Naive thymus-derived CD4-positive, alpha-beta T cell (primary cell): ENCODE measurements at regions of chr1 and their contacts with region 1.

Region 1: GRCh38 chr1:179809506-179810366 is 66.6 kb downstream of the FAM163A start:
- DNase-seq: peak; percentile 53 to 82 (median 78)
- ATAC-seq: peak; percentile 87
- H3K4me3 ChIP-seq: no peak overlapping the region
- H3K4me3 Mint-ChIP-seq: peak overlapping the region in 5 of 10 donors; percentile 20 to 46 (median 32)
- H3K27ac ChIP-seq: no peak overlapping the region
- H3K27ac Mint-ChIP-seq: peak overlapping the region in 6 of 9 donors; percentile 2 to 82 (median 26)
- H3K4me1 ChIP-seq: peaks cover 6 to 13% of the 10 kb centered on the region in 2 donors
- H3K4me1 Mint-ChIP-seq: peaks cover 1 to 13% (median 12%) of the 10 kb centered on the region in 7 donors
- H3K27me3 ChIP-seq: no peaks in the 10 kb centered on the region
- H3K27me3 Mint-ChIP-seq: peaks cover 0 to 6% (median 0%) of the 10 kb centered on the region in 5 donors

Region 2: DNA sequence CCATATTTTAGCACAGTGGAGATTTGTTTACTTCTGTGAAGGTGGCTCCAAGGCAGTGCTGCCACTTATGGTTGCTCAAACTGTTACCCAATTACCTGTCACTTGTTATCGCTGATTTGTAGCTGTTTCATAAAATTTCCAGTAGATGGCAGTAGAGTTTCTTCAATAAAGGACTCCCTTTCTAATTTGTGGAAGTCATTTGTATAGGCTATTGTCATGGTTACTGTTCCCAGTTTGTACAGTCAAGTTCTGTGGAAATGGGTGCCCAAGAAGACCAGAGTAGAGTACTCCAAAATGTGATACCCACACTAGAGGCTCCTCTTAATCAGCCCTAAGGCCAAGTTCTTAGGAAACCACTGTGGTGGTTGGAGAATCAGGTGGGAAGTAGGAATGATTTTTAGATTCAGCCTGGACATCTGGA is 1499.0 kb before region 1 on chr1:
- CTCF ChIA-PET with region 1: no interaction called
- POLR2A ChIA-PET with region 1: no interaction called
- intact Hi-C with region 1: loop called in 1 of 2 experiments (anchors 5 kb)
- DNase-seq: peak in 5 of 9 donors; percentile 13 to 42 (median 22)
- ATAC-seq: peak; percentile 69
- H3K4me3 ChIP-seq: no peak overlapping the region
- H3K4me3 Mint-ChIP-seq: no peak overlapping the region
- H3K27ac ChIP-seq: no peak overlapping the region
- H3K27ac Mint-ChIP-seq: no peak overlapping the region
- H3K4me1 ChIP-seq: no peaks in the 10 kb centered on the region
- H3K4me1 Mint-ChIP-seq: no peaks in the 10 kb centered on the region
- H3K27me3 ChIP-seq: no peaks in the 10 kb centered on the region
- H3K27me3 Mint-ChIP-seq: peaks cover 0 to 16% (median 8%) of the 10 kb centered on the region in 5 donors

Region 3: GRCh38 chr1:178768423-178768822 is 1041.3 kb before region 1 on chr1:
- CTCF ChIA-PET with region 1: no interaction called
- POLR2A ChIA-PET with region 1: no interaction called
- intact Hi-C with region 1: loop called in 1 of 2 experiments (anchors 10 kb)
- DNase-seq: peak in 5 of 9 donors; percentile 3 to 26 (median 15)
- ATAC-seq: peak; percentile 61
- H3K4me3 ChIP-seq: no peak overlapping the region
- H3K4me3 Mint-ChIP-seq: no peak overlapping the region
- H3K27ac ChIP-seq: no peak overlapping the region
- H3K27ac Mint-ChIP-seq: peak overlapping the region in 1 of 9 donors; percentile 16
- H3K4me1 ChIP-seq: no peaks in the 10 kb centered on the region
- H3K4me1 Mint-ChIP-seq: peaks cover 0 to 16% (median 8%) of the 10 kb centered on the region in 7 donors
- H3K27me3 ChIP-seq: no peaks in the 10 kb centered on the region
- H3K27me3 Mint-ChIP-seq: no peaks in the 10 kb centered on the region

Region 4: GRCh38 chr1:179824265-179824664 is 14.5 kb after region 1 on chr1:
- CTCF ChIA-PET with region 1: interaction called, 16 read pairs
- POLR2A ChIA-PET with region 1: interaction called, 66 read pairs
- intact Hi-C with region 1: no loop called
- DNase-seq: no peak
- ATAC-seq: peak; percentile 32
- H3K4me3 ChIP-seq: no peak overlapping the region
- H3K4me3 Mint-ChIP-seq: no peak overlapping the region
- H3K27ac ChIP-seq: no peak overlapping the region
- H3K27ac Mint-ChIP-seq: peak overlapping the region in 1 of 9 donors; percentile 55
- H3K4me1 ChIP-seq: no peaks in the 10 kb centered on the region
- H3K4me1 Mint-ChIP-seq: peaks cover 0 to 8% (median 3%) of the 10 kb centered on the region in 7 donors
- H3K27me3 ChIP-seq: no peaks in the 10 kb centered on the region
- H3K27me3 Mint-ChIP-seq: peaks cover 0 to 3% (median 0%) of the 10 kb centered on the region in 5 donors

Region 5: DNA sequence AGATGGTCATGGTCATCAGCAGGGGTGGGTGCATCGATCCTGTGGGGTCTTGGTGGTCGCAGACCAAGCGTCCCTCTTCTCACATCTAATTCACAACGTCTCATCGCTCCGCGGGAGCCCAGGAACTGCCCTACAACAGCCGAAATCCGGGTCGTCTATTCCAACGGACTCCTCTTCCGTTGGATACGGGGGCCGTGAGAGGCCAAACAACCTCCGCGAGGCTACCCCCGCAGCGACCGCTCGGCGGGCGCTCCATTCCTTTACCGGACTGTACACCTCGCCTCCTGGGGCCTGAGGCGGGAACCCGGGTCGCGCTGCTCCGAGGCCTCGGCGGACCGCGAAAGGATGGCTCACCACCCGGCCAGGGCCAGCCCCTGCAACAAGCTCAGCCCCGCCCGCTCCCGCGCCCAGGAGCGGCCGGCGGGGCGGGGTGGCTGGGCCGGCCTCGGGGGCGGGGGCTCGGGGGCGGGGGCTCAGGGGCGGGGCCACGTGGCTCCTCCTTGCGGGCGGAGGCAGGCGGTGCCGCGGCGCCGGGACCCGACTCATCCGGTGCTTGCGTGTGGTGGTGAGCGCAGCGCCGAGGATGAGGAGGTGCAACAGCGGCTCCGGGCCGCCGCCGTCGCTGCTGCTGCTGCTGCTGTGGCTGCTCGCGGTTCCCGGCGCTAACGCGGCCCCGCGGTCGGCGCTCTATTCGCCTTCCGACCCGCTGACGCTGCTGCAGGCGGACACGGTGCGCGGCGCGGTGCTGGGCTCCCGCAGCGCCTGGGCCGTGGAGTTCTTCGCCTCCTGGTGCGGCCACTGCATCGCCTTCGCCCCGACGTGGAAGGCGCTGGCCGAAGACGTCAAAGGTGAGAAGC is 344.8 kb after region 1 on chr1 and contains the start of gene QSOX1:
- CTCF ChIA-PET with region 1: interaction called, 3 read pairs
- POLR2A ChIA-PET with region 1: no interaction called
- intact Hi-C with region 1: loop called in 1 of 2 experiments (anchors 5 kb)
- DNase-seq: peak; percentile 81 to 89 (median 86)
- ATAC-seq: peak; percentile 97
- H3K4me3 ChIP-seq: peak within 1 kb of the TSS; percentile 94
- H3K4me3 Mint-ChIP-seq: peak within 1 kb of the TSS; percentile 80 to 99 (median 91)
- H3K27ac ChIP-seq: peak within 1 kb of the TSS; percentile 78
- H3K27ac Mint-ChIP-seq: peak within 1 kb of the TSS; percentile 81 to 95 (median 86)
- H3K4me1 ChIP-seq: peaks cover 7 to 20% of the 10 kb centered on the region in 2 donors
- H3K4me1 Mint-ChIP-seq: peaks cover 24 to 45% (median 37%) of the 10 kb centered on the region in 7 donors
- H3K27me3 ChIP-seq: no peaks in the 10 kb centered on the region
- H3K27me3 Mint-ChIP-seq: no peaks in the 10 kb centered on the region
- total RNA-seq, gene QSOX1: 22.1 to 55.6 (median 25.6) TPM